Activated naive CD4-positive, alpha-beta T cell treated with anti-CD3 and anti-CD28 coated beads, Interleukin-2, amount 10 ng/mL, durations not matched to agents 7 days and 5 days (primary cell): ENCODE measurements at regions of chr20 and their contacts with region 1.

Region 1: GRCh38 chr20:35994994-35995453 is 26.6 kb downstream of the CNBD2 start:
- DNase-seq: peak; percentile 88
- H3K4me3 Mint-ChIP-seq: no peak overlapping the region
- H3K27ac Mint-ChIP-seq: no peak overlapping the region
- H3K4me1 Mint-ChIP-seq: no peaks in the 10 kb centered on the region
- H3K27me3 Mint-ChIP-seq: peaks cover 16% of the 10 kb centered on the region

Region 2: GRCh38 chr20:35699127-35699975 is 295.7 kb before region 1 on chr20 and contains the starts of genes NFS1 and ROMO1:
- CTCF ChIA-PET with region 1: no interaction called
- DNase-seq: peak; percentile 91
- H3K4me3 Mint-ChIP-seq: peak within 1 kb of the TSS; percentile 87
- H3K27ac Mint-ChIP-seq: peak within 1 kb of the TSS; percentile 96
- H3K4me1 Mint-ChIP-seq: peaks cover 48% of the 10 kb centered on the region
- H3K27me3 Mint-ChIP-seq: no peaks in the 10 kb centered on the region

Region 3: GRCh38 chr20:35981969-35982368 is 13.1 kb before region 1 on chr20:
- CTCF ChIA-PET with region 1: interaction called, 17 read pairs
- DNase-seq: no peak
- H3K4me3 Mint-ChIP-seq: no peak overlapping the region
- H3K27ac Mint-ChIP-seq: no peak overlapping the region
- H3K4me1 Mint-ChIP-seq: no peaks in the 10 kb centered on the region
- H3K27me3 Mint-ChIP-seq: peaks cover 32% of the 10 kb centered on the region

Region 4: GRCh38 chr20:36132802-36133211 is 137.8 kb after region 1 on chr20:
- CTCF ChIA-PET with region 1: interaction called, 226 read pairs
- DNase-seq: no peak
- H3K4me3 Mint-ChIP-seq: no peak overlapping the region
- H3K27ac Mint-ChIP-seq: no peak overlapping the region
- H3K4me1 Mint-ChIP-seq: no peaks in the 10 kb centered on the region
- H3K27me3 Mint-ChIP-seq: peaks cover 4% of the 10 kb centered on the region

Region 5: GRCh38 chr20:36144336-36144735 is 149.3 kb after region 1 on chr20:
- CTCF ChIA-PET with region 1: interaction called, 226 read pairs
- DNase-seq: no peak
- H3K4me3 Mint-ChIP-seq: no peak overlapping the region
- H3K27ac Mint-ChIP-seq: no peak overlapping the region
- H3K4me1 Mint-ChIP-seq: peaks cover 6% of the 10 kb centered on the region
- H3K27me3 Mint-ChIP-seq: peaks cover 41% of the 10 kb centered on the region